Right lobe of liver (tissue), 6 donors: ENCODE measurements at regions of chr11 and their contacts with region 1.

Region 1: DNA sequence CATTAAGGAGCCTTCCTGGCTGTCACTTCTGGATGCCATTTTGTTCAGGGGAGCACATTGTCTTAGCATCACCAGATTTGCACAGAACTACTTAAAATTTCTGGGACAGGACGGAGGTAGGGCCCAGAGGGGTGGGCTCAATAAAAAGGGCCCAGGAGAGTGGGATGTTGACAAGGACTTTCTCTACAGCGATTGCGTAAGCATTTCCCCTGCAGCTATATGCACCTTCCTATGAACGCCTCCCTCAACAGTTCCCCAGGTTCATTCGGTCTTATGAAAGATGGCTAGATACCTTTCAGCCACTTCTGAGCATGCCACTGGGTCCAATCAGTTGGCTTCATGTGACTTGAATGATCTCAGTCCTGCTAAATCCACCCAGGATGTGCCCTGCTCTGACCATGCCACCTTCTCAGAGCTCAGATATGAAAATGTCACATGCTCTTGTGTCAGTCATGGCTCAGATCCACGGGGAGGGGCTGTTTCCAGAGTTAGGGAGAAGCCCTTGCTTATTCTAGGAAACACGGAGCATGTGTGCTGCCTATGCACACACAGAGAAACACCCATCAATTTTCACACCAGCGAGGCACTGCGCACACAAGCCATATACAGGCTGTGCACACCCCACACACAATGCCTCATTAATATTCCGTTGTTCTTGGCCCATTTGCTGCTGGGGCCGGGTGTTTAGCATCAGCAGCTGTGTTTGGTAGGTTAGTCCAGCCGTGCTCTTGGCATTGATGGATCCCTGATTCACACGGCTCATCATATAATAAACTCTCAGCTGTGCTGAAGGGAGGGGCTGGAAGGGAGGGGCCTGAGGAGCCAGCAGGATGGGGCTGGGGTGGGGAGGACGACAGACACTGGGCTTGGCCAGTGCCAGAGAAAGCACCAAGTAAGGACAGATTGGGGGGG is 52.5 kb upstream of the NNMT start:
- DNase-seq: no peak
- ATAC-seq: peak in 3 of 4 donors; percentile 12 to 35 (median 18)
- H3K4me3 ChIP-seq: no peak overlapping the region
- H3K27ac ChIP-seq: no peak overlapping the region
- H3K4me1 ChIP-seq: no peaks in the 10 kb centered on the region
- H3K27me3 ChIP-seq: no peaks in the 10 kb centered on the region
- CTCF ChIP-seq: no peak
- POLR2A ChIP-seq: no peak

Region 2: GRCh38 chr11:114036156-114036811 is 207.4 kb before region 1 on chr11:
- intact Hi-C with region 1: loop called in 1 of 2 experiments (anchors 10 kb)
- DNase-seq: peak; percentile 87 to 89 (median 88)
- ATAC-seq: peak; percentile 94 to 98 (median 96)
- H3K4me3 ChIP-seq: peak overlapping the region; percentile 45 to 54 (median 51)
- H3K27ac ChIP-seq: peak overlapping the region; percentile 65 to 85 (median 80)
- H3K4me1 ChIP-seq: peaks cover 0 to 14% (median 2%) of the 10 kb centered on the region in 4 donors
- H3K27me3 ChIP-seq: no peaks in the 10 kb centered on the region
- CTCF ChIP-seq: peak; percentile 91 to 95 (median 93)
- POLR2A ChIP-seq: peak; percentile 38

Region 3: GRCh38 chr11:114059278-114059983 is 184.3 kb before region 1 on chr11 and contains the start of gene ZBTB16:
- intact Hi-C with region 1: no loop called
- DNase-seq: peak; percentile 93 to 94 (median 94)
- ATAC-seq: peak; percentile 56 to 73 (median 64)
- H3K4me3 ChIP-seq: peak within 1 kb of the TSS; percentile 78 to 96 (median 89)
- H3K27ac ChIP-seq: peak within 1 kb of the TSS; percentile 93 to 100 (median 94)
- H3K4me1 ChIP-seq: peaks cover 0 to 43% (median 15%) of the 10 kb centered on the region in 4 donors
- H3K27me3 ChIP-seq: no peaks in the 10 kb centered on the region
- CTCF ChIP-seq: peak; percentile 27 to 37 (median 32)
- POLR2A ChIP-seq: peak; percentile 90
- total RNA-seq, gene ZBTB16: 13.1 to 205 (median 52.2) TPM

Region 4: DNA sequence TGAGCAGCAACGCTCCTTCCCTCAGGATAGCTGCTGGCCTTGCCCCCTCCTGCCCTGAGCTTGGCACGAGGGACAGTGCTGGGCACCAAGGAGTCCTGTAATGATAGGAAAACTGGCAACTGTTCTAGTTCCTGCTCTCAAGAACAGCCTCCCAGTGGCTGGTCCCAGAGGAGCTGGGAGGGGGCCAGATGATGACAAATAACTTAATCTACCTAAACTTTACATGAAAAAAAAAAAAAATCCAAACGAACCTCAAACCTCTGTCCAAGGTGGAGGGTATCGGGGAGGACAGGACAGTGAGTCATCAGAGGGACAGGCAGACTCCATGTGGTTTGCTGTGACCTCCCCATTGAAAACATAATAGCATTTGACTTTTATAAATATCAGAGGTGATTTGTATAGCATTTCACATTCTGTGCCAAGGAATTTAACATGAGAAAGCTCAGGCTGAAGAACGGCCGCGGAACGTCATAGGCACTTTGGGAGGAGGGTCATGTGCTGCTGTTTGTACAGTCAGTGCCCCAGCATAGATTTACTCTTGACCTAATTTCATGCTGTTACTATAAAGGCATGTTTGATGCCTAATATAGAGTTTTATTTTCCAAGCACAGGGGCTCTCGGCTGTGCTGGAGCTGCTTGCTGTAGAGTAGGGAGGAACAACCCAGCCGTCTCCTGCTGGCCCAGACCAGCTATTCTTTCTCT is 45.8 kb before region 1 on chr11:
- intact Hi-C with region 1: loop called (anchors 10 kb)
- DNase-seq: peak in 1 of 3 donors; percentile 40
- ATAC-seq: peak; percentile 64 to 72 (median 66)
- H3K4me3 ChIP-seq: no peak overlapping the region
- H3K27ac ChIP-seq: peak overlapping the region; percentile 56 to 70 (median 56)
- H3K4me1 ChIP-seq: peaks cover 0 to 49% (median 23%) of the 10 kb centered on the region in 4 donors
- H3K27me3 ChIP-seq: no peaks in the 10 kb centered on the region
- CTCF ChIP-seq: no peak
- POLR2A ChIP-seq: peak; percentile 46

Region 5: GRCh38 chr11:114280696-114281095 is 37.0 kb after region 1 on chr11:
- intact Hi-C with region 1: no loop called
- DNase-seq: peak; percentile 79 to 88 (median 83)
- ATAC-seq: peak; percentile 70 to 85 (median 84)
- H3K4me3 ChIP-seq: no peak overlapping the region
- H3K27ac ChIP-seq: peak overlapping the region; percentile 14 to 66 (median 18)
- H3K4me1 ChIP-seq: peaks cover 0 to 33% (median 14%) of the 10 kb centered on the region in 4 donors
- H3K27me3 ChIP-seq: no peaks in the 10 kb centered on the region
- CTCF ChIP-seq: peak; percentile 63 to 78 (median 75)
- POLR2A ChIP-seq: peak; percentile 65